Gastrocnemius medialis (tissue), 4 donors: ENCODE measurements at regions of chr15 and their contacts with region 1.

Region 1: GRCh38 chr15:63969652-63970421 is 76.4 kb downstream of the DAPK2 start:
- DNase-seq: peak in 1 of 2 donors; percentile 39
- ATAC-seq: no peak
- H3K4me3 ChIP-seq: no peak overlapping the region
- H3K27ac ChIP-seq: peak overlapping the region; percentile 87 to 93 (median 91)
- H3K4me1 ChIP-seq: peaks cover 97 to 100% of the 10 kb centered on the region in 2 donors
- H3K27me3 ChIP-seq: no peaks in the 10 kb centered on the region
- CTCF ChIP-seq: no peak
- POLR2A ChIP-seq: no peak

Region 2: DNA sequence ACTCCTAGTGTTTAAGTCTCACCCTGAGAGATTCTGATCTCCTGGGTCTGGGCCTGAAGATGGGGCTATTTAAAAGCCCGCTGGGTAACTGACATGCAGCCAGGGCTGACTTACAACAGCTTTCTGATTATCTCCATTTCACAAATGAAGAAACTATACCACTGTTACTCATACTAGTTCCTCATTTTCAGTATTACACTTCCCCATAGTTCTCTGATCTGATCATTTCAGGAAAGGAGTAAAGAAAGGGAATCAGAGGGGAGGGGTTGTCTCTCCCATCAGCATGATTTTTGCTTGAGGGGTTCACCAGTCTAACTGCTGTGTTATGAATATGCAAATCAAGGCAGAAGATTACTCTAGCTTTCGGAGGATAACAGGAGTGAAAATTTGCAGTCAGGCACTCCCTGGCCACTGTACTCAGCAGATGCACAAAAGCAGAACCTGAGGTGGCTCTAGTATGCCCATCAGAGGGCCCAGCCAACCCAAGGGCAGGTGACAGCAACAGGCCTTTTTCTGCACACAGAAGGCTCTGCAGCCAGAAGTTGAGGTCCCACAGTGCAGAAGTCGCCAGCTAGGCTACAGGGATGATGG is 17.0 kb after region 1 on chr15:
- in situ Hi-C with region 1: no loop called
- intact Hi-C with region 1: loop called (anchors 2 kb)
- DNase-seq: no peak
- ATAC-seq: no peak
- H3K4me3 ChIP-seq: no peak overlapping the region
- H3K27ac ChIP-seq: peak overlapping the region; percentile 93 to 96 (median 94)
- H3K4me1 ChIP-seq: peaks cover 78 to 80% of the 10 kb centered on the region in 2 donors
- H3K27me3 ChIP-seq: no peaks in the 10 kb centered on the region
- CTCF ChIP-seq: no peak
- POLR2A ChIP-seq: no peak

Region 3: GRCh38 chr15:64004582-64004981 is 34.7 kb after region 1 on chr15:
- in situ Hi-C with region 1: no loop called
- intact Hi-C with region 1: loop called (anchors 2 kb)
- DNase-seq: peak; percentile 85 to 89
- ATAC-seq: peak; percentile 77 to 83
- H3K4me3 ChIP-seq: no peak overlapping the region
- H3K27ac ChIP-seq: peak overlapping the region; percentile 69 to 94 (median 80)
- H3K4me1 ChIP-seq: peaks cover 82 to 91% of the 10 kb centered on the region in 2 donors
- H3K27me3 ChIP-seq: no peaks in the 10 kb centered on the region
- CTCF ChIP-seq: no peak
- POLR2A ChIP-seq: no peak

Region 4: DNA sequence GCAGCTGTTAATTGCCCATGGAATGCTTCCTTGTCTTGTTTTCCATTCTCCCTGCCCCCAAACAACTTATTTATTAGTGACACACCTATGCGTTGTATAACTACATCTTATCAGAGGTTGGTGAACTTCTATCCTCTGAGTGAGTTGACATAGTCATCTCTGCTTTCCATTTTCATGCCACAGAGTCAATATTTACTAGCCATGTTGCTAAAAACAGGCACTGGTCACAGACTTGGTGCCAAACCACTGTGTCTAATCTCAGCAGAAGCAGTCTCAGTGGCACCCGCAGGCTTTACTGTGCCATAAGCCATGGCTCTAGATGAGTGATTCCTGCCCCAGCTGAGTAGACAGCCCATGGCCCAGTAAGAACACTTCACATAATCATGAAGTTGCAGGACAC is 49.9 kb after region 1 on chr15:
- in situ Hi-C with region 1: no loop called
- intact Hi-C with region 1: loop called (anchors 5 kb)
- DNase-seq: peak; percentile 89 to 90
- ATAC-seq: peak; percentile 76 to 78
- H3K4me3 ChIP-seq: no peak overlapping the region
- H3K27ac ChIP-seq: peak overlapping the region; percentile 84 to 94 (median 90)
- H3K4me1 ChIP-seq: peaks cover 95 to 98% of the 10 kb centered on the region in 2 donors
- H3K27me3 ChIP-seq: no peaks in the 10 kb centered on the region
- CTCF ChIP-seq: no peak
- POLR2A ChIP-seq: peak; percentile 17 to 21

Region 5: GRCh38 chr15:64122936-64123351 is 153.1 kb after region 1 on chr15:
- in situ Hi-C with region 1: no loop called
- intact Hi-C with region 1: no loop called
- DNase-seq: no peak
- ATAC-seq: no peak
- H3K4me3 ChIP-seq: no peak overlapping the region
- H3K27ac ChIP-seq: no peak overlapping the region
- H3K4me1 ChIP-seq: peaks cover 5 to 7% of the 10 kb centered on the region in 2 donors
- H3K27me3 ChIP-seq: no peaks in the 10 kb centered on the region
- CTCF ChIP-seq: no peak
- POLR2A ChIP-seq: no peak